ENCODE measurements at regions of chr3 and their contacts with region 1.

Region 1: GRCh38 chr3:167380004-167380689 is at the start of gene ZBBX:
- DNase-seq: peak; percentile 87
- ATAC-seq: peak; percentile 95
- total RNA-seq, gene ZBBX: not detected

Region 2: DNA sequence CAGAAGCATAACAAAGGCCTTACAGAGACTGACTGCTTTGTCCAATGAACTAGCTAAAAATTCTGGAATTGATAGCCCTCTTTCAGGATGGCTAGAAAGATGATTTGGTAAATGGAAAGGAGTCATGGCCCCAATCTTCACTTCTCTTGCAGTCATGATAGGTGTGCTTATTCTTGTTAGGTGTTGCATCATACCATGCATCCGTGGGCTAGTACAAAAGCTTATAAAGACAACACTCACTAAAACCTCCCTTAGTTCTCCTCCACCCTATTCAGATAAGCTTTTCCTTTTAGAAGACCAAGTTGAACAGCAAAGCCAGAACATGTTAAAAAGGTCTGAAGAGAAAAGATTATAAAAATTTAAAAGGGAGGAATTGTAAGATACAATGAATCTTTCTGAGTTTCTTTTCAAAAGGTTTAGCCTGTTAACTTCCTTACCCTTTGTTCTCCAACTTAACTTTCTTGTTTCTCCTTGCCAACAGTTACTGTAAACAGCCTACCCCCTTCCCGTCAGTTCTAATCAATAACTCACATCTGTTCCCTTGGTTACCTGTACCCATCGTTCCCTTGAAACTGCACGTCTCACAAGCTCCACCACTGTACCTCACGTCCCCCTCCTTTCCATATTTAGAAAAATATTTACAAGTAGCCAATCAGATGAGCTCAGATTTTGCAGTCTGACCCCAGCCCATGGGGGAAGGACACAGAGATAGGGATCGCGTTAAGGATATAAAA is 105.8 kb before region 1 on chr3:
- intact Hi-C with region 1: no loop called
- DNase-seq: no peak
- ATAC-seq: no peak

Region 3: GRCh38 chr3:167691366-167691765 is 311.2 kb after region 1 on chr3:
- intact Hi-C with region 1: loop called (anchors 10 kb)
- DNase-seq: no peak
- ATAC-seq: no peak

Region 4: GRCh38 chr3:167882067-167882667 is 502.0 kb after region 1 on chr3:
- intact Hi-C with region 1: loop called (anchors 10 kb)
- DNase-seq: no peak
- ATAC-seq: no peak